ENCODE measurements at regions of chr1 and their contacts with region 1.

Region 1: GRCh38 chr1:33944027-33944426 is 80.1 kb downstream of the HMGB4 start:
- DNase-seq: no peak
- CTCF ChIP-seq: no peak

Region 2: DNA sequence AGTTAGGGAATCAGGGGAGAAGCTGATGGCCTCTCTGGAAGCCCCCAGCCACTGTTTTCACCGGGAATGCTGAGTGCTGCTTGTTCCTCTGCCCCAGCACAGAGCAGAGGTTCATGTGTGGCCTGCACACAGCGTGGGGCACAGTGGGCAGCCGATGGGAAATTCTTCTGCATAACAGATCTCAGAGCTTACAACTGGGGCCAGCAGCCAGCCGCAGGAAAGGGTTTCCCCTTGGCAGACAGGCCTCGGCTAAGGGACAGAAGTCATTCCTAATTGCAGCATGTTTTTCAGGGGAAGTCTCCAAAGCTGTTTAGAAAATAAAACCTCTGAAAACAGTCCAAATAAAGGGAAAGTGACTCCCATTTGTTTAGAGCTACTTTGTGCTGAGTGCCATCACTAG is 57.5 kb before region 1 on chr1:
- in situ Hi-C with region 1: loop called (anchors 10 kb)
- DNase-seq: no peak
- CTCF ChIP-seq: no peak

Measured in GM13976 (cell line).